ENCODE measurements at regions of chr5 and their contacts with region 1.

Region 1: GRCh38 chr5:164013077-164013670 is 507.8 kb downstream of the MAT2B start:
- DNase-seq: no peak

Region 2: DNA sequence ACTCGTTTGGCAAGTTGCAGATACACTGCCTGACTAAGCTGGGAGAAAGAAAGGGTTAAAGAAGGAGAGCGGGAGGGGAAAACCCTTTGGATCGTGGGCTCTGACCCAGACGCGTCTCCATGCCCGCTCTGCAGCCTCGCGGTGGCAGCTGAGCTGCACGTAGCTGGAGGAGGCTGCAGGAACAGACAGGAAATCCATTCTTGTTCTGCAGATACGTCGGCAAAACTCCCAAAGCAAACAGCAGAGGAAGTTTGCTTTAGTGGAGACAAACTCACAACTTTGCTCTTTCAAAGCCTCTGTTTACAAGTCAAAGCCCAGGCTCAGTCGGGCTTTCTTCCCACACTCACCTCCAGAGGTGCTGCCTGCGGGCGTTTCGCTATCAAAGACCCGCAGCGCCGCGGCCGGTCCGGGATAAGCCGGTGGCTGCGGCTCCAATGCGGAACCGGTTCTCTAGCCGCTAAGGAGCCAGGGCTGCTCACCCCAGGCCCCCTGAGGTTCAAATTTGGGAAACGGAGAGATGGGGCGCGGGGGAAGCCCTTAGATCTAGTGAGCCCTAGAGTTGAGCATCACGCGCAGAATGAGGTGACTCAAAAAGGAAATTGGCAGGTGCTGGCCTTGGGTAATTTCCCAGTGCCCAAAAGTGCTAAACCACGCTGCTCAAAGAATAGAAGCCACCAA is 447.1 kb before region 1 on chr5:
- intact Hi-C with region 1: loop called in 1 of 2 experiments (anchors 5 kb)
- DNase-seq: peak; percentile 81

Region 3: DNA sequence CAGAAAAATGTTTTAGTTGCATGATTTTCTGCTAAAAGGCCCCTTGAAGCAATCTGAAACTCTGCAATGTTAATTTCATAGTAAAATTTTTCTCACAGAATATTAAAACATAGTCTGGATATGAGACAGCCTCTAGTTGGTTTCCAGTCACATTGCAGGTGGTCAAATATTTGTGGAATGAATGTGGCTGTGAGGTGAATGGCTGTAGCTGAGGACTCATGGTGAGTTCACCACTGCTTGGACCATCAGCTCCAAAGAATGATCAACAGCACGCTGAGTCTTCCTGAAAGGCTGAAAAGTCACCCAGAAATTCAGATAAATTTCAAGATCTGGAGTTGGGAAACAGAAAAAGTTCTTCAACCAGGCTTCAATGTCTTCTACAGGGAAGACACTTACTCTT is 428.0 kb before region 1 on chr5:
- intact Hi-C with region 1: no loop called
- DNase-seq: no peak

Region 4: GRCh38 chr5:163695830-163696578 is 317.2 kb before region 1 on chr5:
- intact Hi-C with region 1: loop called in 1 of 2 experiments (anchors 10 kb)
- DNase-seq: no peak

Region 5: DNA sequence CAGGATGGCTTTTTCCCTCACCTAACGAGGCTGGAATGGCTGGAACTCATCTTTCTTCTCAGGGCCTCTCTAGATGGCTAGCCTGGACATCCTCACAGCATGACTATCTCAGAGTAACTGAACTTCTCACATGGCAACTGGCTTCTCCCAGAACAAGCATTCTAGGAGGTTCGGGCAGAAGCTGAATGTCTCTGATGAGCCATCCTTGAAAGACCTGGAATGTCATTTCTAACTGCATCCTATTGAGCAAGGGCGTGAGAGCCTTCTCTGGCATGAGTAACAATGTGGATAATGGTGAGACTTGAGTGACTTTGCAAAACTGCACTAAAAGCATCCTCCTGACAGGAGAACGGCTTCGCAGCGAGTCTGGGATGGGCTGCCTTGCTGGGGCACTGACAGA is 20.0 kb before region 1 on chr5:
- intact Hi-C with region 1: no loop called
- DNase-seq: no peak

Region 6: DNA sequence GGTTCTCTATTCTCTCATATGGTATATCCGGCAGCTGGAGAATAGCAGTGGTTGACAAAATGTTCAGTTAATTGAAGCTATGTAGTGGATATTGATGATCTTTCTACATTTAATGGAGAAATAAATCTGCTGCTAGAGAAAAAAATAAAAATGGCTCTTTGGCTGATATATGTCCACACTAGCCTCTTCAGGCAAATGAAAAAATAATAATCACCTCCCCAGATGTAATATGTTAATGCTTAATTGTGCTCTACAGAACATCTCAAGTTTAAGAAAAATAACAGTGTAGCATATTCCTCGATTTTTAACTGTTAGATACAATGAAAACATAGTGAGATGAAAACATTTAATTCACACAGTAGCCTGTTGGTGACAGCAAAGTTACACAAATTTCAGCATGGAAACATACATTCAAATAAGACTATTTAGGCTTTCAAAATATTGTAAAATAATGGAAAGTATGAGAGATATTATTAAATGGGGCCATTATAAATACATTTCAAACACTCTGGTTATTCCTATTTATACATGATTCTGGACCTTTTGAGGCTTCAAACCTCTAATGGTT is 35.3 kb after region 1 on chr5:
- intact Hi-C with region 1: no loop called
- DNase-seq: no peak

Region 7: DNA sequence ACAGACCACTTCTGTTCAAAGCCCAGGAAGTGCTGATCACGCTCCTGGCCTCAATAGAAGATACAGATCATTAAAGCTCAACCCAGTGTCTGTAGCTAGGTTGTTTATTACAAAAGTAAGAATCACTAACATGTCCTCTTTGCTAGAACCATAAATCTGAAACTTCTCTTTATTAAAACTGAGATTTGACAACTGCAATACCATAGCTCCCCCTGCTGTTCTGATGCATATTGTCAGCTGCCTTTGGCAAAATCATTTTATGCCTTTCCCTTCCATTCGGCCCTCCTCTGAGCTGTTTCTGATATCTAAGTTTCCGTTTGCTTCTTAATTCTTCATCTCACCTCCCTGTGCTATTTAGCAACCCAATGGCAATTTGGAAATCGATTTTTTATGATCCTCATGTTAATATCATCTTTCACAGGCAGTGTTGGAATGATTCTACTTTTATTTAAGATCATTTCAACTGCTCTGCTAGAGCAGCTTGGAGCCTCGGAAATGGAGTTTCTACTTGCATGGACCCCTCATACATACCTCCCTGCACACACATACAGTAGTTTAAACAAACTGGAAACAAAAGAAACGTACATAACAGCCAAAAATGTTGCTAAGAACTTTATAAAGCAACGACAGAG is 491.1 kb after region 1 on chr5:
- intact Hi-C with region 1: loop called in 1 of 2 experiments (anchors 10 kb)
- DNase-seq: no peak

Region 8: DNA sequence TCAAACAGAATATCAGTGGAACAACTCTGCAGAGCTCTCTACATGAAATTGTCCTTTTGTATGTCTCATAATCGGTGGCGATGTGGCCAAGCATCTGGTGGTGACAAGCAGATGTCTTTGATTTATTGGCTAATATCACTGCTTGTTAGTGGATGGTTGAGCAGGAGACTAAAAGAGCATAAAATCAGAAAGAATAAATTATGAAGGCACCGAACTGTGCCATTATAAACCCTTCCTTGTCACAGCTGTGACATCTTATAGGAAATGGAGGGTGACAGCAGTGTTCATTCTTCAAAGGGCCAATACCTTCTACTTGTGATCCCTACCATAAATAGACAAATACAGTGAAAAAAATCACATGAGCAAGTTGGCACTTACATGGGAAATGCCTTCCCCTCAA is 896.5 kb after region 1 on chr5:
- intact Hi-C with region 1: no loop called
- DNase-seq: no peak

Measured in posterior vena cava (tissue), 2 donors.